AG04449 (cell line): ENCODE measurements at regions of chr4 and their contacts with region 1.

Region 1: DNA sequence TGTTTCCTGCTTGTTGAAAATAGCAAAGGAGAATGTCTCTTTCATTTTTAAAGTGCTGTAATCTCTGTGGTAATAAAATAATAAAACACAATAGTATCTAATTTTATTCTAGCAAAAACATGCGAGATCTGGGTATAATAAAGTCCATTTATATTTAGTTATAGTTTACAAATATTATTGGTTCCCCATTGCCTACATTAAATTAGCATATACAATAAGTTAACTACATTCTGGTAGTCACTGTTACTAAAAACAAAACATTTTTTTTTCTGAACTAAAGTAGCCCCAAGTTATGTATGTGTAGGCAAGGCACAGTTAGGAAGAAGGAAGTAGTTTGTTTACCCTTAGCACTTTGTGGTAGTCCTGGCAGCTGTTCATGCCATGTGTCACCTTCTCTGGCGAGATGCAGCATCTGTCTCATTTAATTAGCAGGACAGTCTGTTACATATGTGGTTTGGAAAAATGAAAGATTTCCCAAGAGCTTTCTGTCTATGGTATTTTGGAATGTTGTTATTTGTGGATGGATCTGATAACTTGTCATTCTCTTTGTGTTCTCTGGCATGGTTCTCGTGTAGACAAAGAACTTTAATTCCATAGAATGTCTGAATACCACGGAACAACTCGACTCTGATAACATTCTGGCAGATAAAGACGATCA is 231.3 kb upstream of the PITX2 start:
- DNase-seq: peak; percentile 93
- H3K4me3 ChIP-seq: no peak overlapping the region
- CTCF ChIP-seq: no peak

Region 2: GRCh38 chr4:110867251-110867960 is 13.3 kb after region 1 on chr4:
- CTCF ChIA-PET with region 1: interaction called, 3 read pairs
- POLR2A ChIA-PET with region 1: interaction called, 10 read pairs
- DNase-seq: no peak
- H3K4me3 ChIP-seq: no peak overlapping the region
- CTCF ChIP-seq: no peak